ENCODE measurements at regions of chr12 and their contacts with region 1.

Region 1: DNA sequence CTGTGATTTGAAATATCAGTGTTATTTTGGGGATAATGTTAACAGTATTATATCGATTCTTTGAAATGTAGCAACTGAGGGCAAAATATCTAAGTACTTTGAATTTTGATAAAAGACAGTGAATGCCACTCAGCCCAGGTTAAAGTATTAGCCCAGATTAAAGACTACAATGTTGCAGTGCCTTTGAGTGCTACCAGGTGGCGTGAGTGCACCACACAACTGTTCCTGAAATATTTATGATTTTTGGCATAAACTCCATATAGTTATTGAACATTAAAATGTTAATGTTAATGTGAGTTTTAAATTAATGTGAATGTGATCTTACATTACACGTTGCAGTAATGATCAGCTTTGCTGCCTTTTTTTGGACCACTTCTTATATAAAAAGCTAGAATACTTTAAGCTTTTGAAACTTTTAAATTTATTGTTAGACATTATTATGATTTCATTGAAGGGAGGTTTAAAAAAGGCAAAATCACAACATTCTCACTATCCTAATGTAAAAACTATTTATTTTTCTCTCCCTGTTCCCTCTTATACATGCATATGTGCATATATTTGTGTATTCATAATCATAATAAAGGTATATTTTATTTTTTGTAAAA is 22.5 kb downstream of the MRPS35 start:
- DNase-seq: peak; percentile 66
- H3K4me3 ChIP-seq: no peak overlapping the region
- H3K27ac ChIP-seq: no peak overlapping the region
- H3K4me1 ChIP-seq: peaks cover 9% of the 10 kb centered on the region; the same call in 1 of the 2 replicates
- H3K27me3 ChIP-seq: no peaks in the 10 kb centered on the region

Region 2: GRCh38 chr12:27940756-27941402 is 207.7 kb after region 1 on chr12:
- in situ Hi-C with region 1: loop called (anchors 10 kb)
- DNase-seq: peak; percentile 76
- H3K4me3 ChIP-seq: no peak overlapping the region
- H3K27ac ChIP-seq: no peak overlapping the region
- H3K4me1 ChIP-seq: peaks cover 9% of the 10 kb centered on the region; the same call in 1 of the 2 replicates
- H3K27me3 ChIP-seq: no peaks in the 10 kb centered on the region